Activated CD4-positive, alpha-beta T cell treated with anti-CD3 and anti-CD28 coated beads, Interleukin-2, amount 10 ng/mL, durations not matched to agents 7 days and 5 days (primary cell): ENCODE measurements at regions of chr10 and their contacts with region 1.

Region 1: DNA sequence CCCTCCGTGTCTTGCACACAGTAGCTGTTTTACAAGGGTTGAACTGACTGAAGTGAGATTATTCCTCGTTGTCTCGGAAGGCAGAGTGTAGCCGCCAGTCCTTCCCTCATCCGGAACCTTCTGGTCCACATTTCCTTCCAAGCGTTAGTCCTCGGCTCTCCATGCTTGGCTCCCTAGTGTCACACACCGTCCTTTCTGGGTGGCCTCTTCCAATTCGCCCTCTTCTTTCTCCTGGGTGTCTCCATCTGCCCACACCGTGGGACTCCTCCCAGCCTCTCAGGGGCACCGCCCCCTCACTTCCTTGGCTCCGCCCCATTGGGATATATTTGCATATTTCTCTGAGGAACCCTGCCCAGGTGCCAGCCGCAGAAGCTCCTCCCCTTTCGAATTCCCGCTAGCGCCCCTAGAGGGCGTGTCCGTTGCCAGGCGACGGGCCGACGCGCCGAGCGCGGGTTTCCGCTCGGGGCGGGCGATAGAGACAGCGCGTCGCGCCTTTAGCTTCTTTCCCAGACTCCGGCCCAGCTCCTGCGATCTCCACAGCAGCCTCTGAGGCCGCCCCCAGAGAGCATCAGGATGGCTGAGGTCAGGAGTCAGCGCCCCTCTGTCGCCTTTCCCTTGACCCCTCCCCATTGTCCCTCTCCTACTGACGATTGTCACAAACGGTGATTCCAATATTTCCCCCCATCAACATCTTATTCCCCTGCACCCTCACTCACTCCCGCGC is at the start of gene CFAP58:
- DNase-seq: peak; percentile 92
- H3K4me3 Mint-ChIP-seq: peak within 1 kb of the TSS; percentile 34
- H3K27ac Mint-ChIP-seq: peak within 1 kb of the TSS; percentile 51
- H3K4me1 Mint-ChIP-seq: no peaks in the 10 kb centered on the region
- H3K27me3 Mint-ChIP-seq: no peaks in the 10 kb centered on the region
- total RNA-seq, gene CFAP58: 0.22 to 0.27 TPM

Region 2: DNA sequence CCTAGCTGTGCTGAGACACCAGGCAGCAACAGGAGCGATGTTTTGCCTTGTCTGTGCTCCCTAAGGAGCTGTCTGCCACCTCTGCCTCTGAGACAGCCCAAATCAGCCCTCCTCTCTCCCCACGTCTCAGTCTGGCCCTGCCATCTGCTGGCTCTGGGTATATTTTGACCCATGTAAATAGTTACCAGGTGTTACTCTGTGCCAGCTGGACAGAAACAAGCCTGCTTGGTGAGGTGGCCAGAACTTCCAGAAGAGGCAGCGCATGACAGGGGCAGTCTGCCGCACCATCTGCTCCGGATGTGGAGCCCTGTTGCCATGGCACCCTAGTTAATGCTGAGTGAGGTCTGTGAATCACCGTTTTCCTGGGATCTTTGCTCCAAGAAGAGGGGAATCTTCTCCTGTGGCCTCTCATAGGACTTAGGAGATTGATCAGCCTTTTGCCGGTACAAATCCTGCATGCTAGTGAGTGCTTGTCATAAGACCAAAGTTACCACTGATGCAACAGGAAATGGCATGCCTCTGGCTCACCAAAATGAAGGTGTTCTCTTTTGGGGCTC is 52.7 kb before region 1 on chr10:
- CTCF ChIA-PET with region 1: interaction called, 47 read pairs
- POLR2A ChIA-PET with region 1: interaction called, 8 read pairs
- DNase-seq: peak; percentile 45
- H3K4me3 Mint-ChIP-seq: no peak overlapping the region
- H3K27ac Mint-ChIP-seq: peak overlapping the region; percentile 84
- H3K4me1 Mint-ChIP-seq: peaks cover 43% of the 10 kb centered on the region
- H3K27me3 Mint-ChIP-seq: no peaks in the 10 kb centered on the region

Region 3: DNA sequence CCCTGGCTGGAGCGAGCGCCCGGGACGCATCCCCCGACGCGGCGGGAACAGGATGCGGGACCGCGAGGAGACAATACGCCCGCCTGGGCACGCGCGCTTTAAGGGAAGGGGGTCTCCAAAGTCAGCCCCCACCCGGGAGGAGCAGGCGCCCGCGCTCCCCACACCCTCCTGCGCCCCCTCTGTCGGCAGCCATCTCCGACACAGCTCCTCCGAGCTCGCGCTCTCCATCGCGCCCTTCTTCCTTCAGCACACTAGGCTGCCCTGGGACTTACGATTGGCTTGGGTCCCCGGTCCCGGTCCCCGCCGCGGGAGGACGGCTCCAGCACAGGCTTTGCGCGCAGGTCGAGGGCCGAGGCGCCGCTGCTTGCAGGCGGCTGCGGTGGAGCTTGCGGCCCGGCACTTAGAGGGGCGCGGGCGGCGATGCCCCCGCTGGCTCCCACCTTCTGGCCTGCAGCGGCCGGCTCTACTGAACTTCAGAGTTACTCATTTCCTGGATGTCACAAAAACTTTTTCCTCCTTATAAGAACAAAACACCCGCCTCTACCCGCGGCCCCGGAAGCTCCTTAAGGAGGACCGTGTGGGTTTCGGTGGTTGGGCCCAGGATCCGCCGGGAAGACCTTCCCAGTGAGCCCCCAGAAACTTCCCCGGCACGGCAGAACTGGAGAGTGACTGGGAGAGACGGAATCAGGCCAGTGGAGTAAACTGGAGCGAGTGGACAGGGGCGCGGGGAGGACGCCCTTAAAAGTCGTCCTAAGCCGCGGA is 15.3 kb before region 1 on chr10 and contains the start of gene ITPRIP:
- CTCF ChIA-PET with region 1: interaction called, 16 read pairs
- POLR2A ChIA-PET with region 1: interaction called, 7 read pairs
- DNase-seq: peak; percentile 75
- H3K4me3 Mint-ChIP-seq: peak within 1 kb of the TSS; percentile 98
- H3K27ac Mint-ChIP-seq: peak within 1 kb of the TSS; percentile 100
- H3K4me1 Mint-ChIP-seq: peaks cover 55% of the 10 kb centered on the region
- H3K27me3 Mint-ChIP-seq: peaks cover 5% of the 10 kb centered on the region
- total RNA-seq, gene ITPRIP: 24.9 to 26.5 TPM

Region 4: DNA sequence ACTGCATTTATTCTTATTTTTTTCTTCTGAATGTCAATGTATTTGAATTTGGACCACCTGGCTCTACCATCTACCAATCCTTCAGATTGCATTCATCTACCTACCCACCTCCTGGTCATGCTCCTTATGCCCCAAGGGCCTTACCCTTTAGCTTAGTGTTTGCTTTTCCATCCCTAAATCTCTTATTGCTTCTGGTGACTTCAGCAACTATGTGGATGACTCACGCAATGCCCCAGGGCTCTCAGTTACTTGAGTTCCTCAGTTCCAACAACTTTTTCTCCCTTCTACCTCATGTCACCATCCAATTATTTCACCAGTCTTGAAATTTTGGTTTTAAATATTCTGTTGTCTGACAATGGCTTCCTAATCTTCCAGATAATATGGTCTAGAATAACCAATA is 119.0 kb after region 1 on chr10:
- CTCF ChIA-PET with region 1: no interaction called
- POLR2A ChIA-PET with region 1: no interaction called
- DNase-seq: no peak
- H3K4me3 Mint-ChIP-seq: no peak overlapping the region
- H3K27ac Mint-ChIP-seq: no peak overlapping the region
- H3K4me1 Mint-ChIP-seq: no peaks in the 10 kb centered on the region
- H3K27me3 Mint-ChIP-seq: peaks cover 15% of the 10 kb centered on the region

Region 5: GRCh38 chr10:104501864-104502579 is 148.5 kb after region 1 on chr10:
- CTCF ChIA-PET with region 1: no interaction called
- POLR2A ChIA-PET with region 1: no interaction called
- DNase-seq: no peak
- H3K4me3 Mint-ChIP-seq: no peak overlapping the region
- H3K27ac Mint-ChIP-seq: no peak overlapping the region
- H3K4me1 Mint-ChIP-seq: no peaks in the 10 kb centered on the region
- H3K27me3 Mint-ChIP-seq: peaks cover 5% of the 10 kb centered on the region